ENCODE measurements at regions of chrX and their contacts with region 1.

Region 1: GRCh38 chrX:9464435-9465371 is at the start of gene TBL1X:
- DNase-seq: peak; percentile 29
- H3K4me3 Mint-ChIP-seq: peak within 1 kb of the TSS; percentile 74
- H3K27ac Mint-ChIP-seq: peak within 1 kb of the TSS; percentile 82
- H3K4me1 Mint-ChIP-seq: peaks cover 40% of the 10 kb centered on the region
- H3K27me3 Mint-ChIP-seq: no peaks in the 10 kb centered on the region
- total RNA-seq, gene TBL1X: 20.7 to 21.6 TPM

Region 2: GRCh38 chrX:8820910-8821527 is 643.7 kb before region 1 on chrX:
- CTCF ChIA-PET with region 1: no interaction called
- intact Hi-C with region 1: loop called (anchors 10 kb)
- DNase-seq: peak; percentile 8
- H3K4me3 Mint-ChIP-seq: no peak overlapping the region
- H3K27ac Mint-ChIP-seq: no peak overlapping the region
- H3K4me1 Mint-ChIP-seq: no peaks in the 10 kb centered on the region
- H3K27me3 Mint-ChIP-seq: peaks cover 2% of the 10 kb centered on the region

Region 3: GRCh38 chrX:8971116-8971515 is 493.6 kb before region 1 on chrX:
- CTCF ChIA-PET with region 1: no interaction called
- intact Hi-C with region 1: loop called (anchors 5 kb)
- DNase-seq: no peak
- H3K4me3 Mint-ChIP-seq: no peak overlapping the region
- H3K27ac Mint-ChIP-seq: no peak overlapping the region
- H3K4me1 Mint-ChIP-seq: no peaks in the 10 kb centered on the region
- H3K27me3 Mint-ChIP-seq: no peaks in the 10 kb centered on the region

Region 4: GRCh38 chrX:9530848-9531274 is 66.2 kb after region 1 on chrX:
- CTCF ChIA-PET with region 1: no interaction called
- intact Hi-C with region 1: no loop called
- DNase-seq: peak; percentile 69
- H3K4me3 Mint-ChIP-seq: peak overlapping the region; percentile 61
- H3K27ac Mint-ChIP-seq: no peak overlapping the region
- H3K4me1 Mint-ChIP-seq: peaks cover 49% of the 10 kb centered on the region
- H3K27me3 Mint-ChIP-seq: no peaks in the 10 kb centered on the region

Region 5: GRCh38 chrX:9829308-9830267 is 364.9 kb after region 1 on chrX:
- CTCF ChIA-PET with region 1: no interaction called
- intact Hi-C with region 1: loop called (anchors 5 kb)
- DNase-seq: peak; percentile 71
- H3K4me3 Mint-ChIP-seq: no peak overlapping the region
- H3K27ac Mint-ChIP-seq: no peak overlapping the region
- H3K4me1 Mint-ChIP-seq: peaks cover 4% of the 10 kb centered on the region
- H3K27me3 Mint-ChIP-seq: peaks cover 13% of the 10 kb centered on the region

Region 6: GRCh38 chrX:10111364-10112148 is 646.9 kb after region 1 on chrX:
- CTCF ChIA-PET with region 1: no interaction called
- intact Hi-C with region 1: loop called (anchors 5 kb)
- DNase-seq: peak; percentile 59
- H3K4me3 Mint-ChIP-seq: peak overlapping the region; percentile 64
- H3K27ac Mint-ChIP-seq: peak overlapping the region; percentile 91
- H3K4me1 Mint-ChIP-seq: peaks cover 56% of the 10 kb centered on the region
- H3K27me3 Mint-ChIP-seq: no peaks in the 10 kb centered on the region

Measured in activated naive CD4-positive, alpha-beta T cell treated with anti-CD3 and anti-CD28 coated beads for 36 hours (primary cell).